ENCODE measurements at regions of chr3 and their contacts with region 1.

Region 1: DNA sequence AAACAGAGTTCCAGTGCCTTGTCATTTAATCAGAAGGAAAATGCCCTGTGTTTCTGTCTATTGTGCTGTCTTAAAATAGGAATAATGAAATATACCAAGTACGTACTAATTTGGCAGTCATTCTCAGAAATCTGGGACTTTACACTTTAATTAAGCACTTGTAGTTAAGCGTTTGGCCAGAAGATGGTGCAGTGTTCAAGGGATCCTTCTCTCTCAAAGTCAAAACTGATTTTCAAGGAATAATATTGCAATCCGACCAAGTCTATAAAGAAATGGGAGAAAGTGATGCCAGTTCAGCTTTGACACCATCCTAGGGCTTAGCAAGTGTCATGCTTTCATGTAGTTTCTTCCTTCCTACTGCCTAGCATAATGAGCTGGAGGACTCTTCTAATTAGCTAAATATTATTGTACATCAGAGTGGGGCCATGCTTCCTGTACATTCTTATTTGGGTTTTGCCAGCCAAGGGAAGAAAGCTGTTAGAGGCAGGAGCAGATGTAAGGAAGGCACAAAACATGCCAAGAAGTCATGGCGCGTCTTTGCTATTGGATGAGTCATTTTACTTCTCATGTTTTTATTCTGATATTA is 64.8 kb downstream of the SAMMSON start:
- DNase-seq: peak; percentile 1
- ATAC-seq: peak; percentile 51
- H3K4me3 ChIP-seq: no peak overlapping the region
- H3K27ac ChIP-seq: no peak overlapping the region
- H3K4me1 ChIP-seq: no peaks in the 10 kb centered on the region
- H3K27me3 ChIP-seq: no peaks in the 10 kb centered on the region
- CTCF ChIP-seq: peak; percentile 52 to 63 (median 63); a peak in 5 of 6 replicates
- EP300 ChIP-seq: no peak
- POLR2A ChIP-seq: no peak
- RAD21 ChIP-seq: peak; percentile 72

Region 2: DNA sequence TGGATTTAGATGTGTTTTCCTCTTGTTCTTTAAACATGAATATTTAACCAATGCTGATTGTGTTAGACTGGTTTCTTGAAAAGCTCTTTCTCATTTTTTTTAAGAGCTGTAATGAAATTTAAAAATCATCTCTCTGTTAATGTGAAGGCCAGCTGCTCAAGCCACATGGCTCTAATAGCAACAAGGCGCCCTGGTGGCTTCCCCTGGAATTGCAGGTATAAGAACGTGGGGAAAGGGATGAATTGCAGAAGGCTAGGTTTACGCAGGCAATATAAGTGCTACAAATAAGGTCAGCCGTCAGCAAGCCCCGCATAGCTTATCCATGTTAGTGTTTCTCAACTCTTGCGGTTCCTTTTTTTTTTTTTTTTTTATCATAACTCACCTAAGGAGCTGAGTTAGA is 43.8 kb after region 1 on chr3:
- CTCF ChIA-PET with region 1: interaction called, 18 read pairs
- POLR2A ChIA-PET with region 1: no interaction called
- RAD21 ChIA-PET with region 1: no interaction called
- SMC1A ChIA-PET with region 1: interaction called, 6 read pairs
- in situ Hi-C with region 1: no loop called
- intact Hi-C with region 1: loop called (anchors 2 kb)
- DNase-seq: no peak
- ATAC-seq: peak; percentile 66
- H3K4me3 ChIP-seq: no peak overlapping the region
- H3K27ac ChIP-seq: no peak overlapping the region
- H3K4me1 ChIP-seq: no peaks in the 10 kb centered on the region
- H3K27me3 ChIP-seq: no peaks in the 10 kb centered on the region
- CTCF ChIP-seq: peak; percentile 34 to 78 (median 76)
- EP300 ChIP-seq: no peak
- POLR2A ChIP-seq: no peak
- RAD21 ChIP-seq: peak; percentile 60; the same call in 1 of the 2 replicates

Region 3: GRCh38 chr3:70358978-70359580 is 294.8 kb after region 1 on chr3:
- CTCF ChIA-PET with region 1: interaction called, 6 read pairs
- POLR2A ChIA-PET with region 1: no interaction called
- RAD21 ChIA-PET with region 1: no interaction called
- SMC1A ChIA-PET with region 1: no interaction called
- in situ Hi-C with region 1: no loop called
- intact Hi-C with region 1: loop called (anchors 2 kb)
- DNase-seq: no peak
- ATAC-seq: peak; percentile 47
- H3K4me3 ChIP-seq: no peak overlapping the region
- H3K27ac ChIP-seq: no peak overlapping the region
- H3K4me1 ChIP-seq: no peaks in the 10 kb centered on the region
- H3K27me3 ChIP-seq: no peaks in the 10 kb centered on the region; a peak in 1 of 4 replicates
- CTCF ChIP-seq: peak; percentile 49 to 62 (median 50); a peak in 5 of 6 replicates
- EP300 ChIP-seq: no peak
- POLR2A ChIP-seq: no peak
- RAD21 ChIP-seq: peak; percentile 67

Region 4: DNA sequence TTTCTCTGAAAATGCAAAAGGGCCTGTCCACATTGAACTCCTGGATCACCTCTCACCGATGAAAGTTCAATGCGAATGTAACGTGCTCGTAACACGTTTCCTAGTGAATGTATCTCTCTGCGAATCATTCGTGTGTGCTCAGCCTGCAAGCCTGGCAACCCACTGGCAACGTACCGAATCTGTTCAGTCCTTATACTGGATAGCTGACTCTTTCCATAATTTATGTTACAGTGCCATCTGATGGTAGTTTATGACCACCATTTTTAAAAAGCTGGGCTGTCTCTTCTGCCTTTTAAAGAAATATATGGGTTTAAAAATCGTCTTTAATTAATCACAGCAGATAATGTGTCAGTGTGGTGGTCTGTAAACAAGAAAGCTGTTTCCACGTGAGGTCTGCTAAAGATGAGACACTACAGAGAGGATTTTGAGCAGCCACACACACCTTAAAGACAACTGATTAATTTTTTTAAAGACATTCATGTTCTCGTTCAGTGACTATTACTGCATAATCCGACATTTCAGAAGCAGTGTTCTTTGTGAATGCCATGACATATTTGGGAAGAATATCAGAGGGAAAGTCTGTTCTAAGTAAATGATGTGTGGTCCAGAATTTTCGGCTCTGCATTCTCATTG is 1588.6 kb after region 1 on chr3:
- CTCF ChIA-PET with region 1: interaction called, 3 read pairs
- POLR2A ChIA-PET with region 1: no interaction called
- RAD21 ChIA-PET with region 1: no interaction called
- SMC1A ChIA-PET with region 1: no interaction called
- in situ Hi-C with region 1: no loop called
- intact Hi-C with region 1: loop called (anchors 1 kb)
- DNase-seq: peak; percentile 4
- ATAC-seq: peak; percentile 71
- H3K4me3 ChIP-seq: no peak overlapping the region
- H3K27ac ChIP-seq: no peak overlapping the region
- H3K4me1 ChIP-seq: no peaks in the 10 kb centered on the region
- H3K27me3 ChIP-seq: peaks cover 0 to 2% of the 10 kb centered on the region in 2 experiments; a peak in 1 of 4 replicates
- CTCF ChIP-seq: peak in 1 of 3 experiments; percentile 56; a peak in 4 of 6 replicates
- EP300 ChIP-seq: no peak
- POLR2A ChIP-seq: no peak
- RAD21 ChIP-seq: peak; percentile 62

Measured in GM12878 (cell line).